Tibial artery (tissue), 4 donors: ENCODE measurements at regions of chr16 and their contacts with region 1.

Region 1: GRCh38 chr16:69123910-69124309 is 8.5 kb downstream of the CHTF8 start:
- DNase-seq: peak in 1 of 2 donors; percentile 41
- H3K4me3 ChIP-seq: no peak overlapping the region
- H3K27ac ChIP-seq: no peak overlapping the region
- H3K4me1 ChIP-seq: peaks cover 0 to 23% (median 2%) of the 10 kb centered on the region in 4 donors
- H3K27me3 ChIP-seq: no peaks in the 10 kb centered on the region
- CTCF ChIP-seq: peak; percentile 45 to 76

Region 2: DNA sequence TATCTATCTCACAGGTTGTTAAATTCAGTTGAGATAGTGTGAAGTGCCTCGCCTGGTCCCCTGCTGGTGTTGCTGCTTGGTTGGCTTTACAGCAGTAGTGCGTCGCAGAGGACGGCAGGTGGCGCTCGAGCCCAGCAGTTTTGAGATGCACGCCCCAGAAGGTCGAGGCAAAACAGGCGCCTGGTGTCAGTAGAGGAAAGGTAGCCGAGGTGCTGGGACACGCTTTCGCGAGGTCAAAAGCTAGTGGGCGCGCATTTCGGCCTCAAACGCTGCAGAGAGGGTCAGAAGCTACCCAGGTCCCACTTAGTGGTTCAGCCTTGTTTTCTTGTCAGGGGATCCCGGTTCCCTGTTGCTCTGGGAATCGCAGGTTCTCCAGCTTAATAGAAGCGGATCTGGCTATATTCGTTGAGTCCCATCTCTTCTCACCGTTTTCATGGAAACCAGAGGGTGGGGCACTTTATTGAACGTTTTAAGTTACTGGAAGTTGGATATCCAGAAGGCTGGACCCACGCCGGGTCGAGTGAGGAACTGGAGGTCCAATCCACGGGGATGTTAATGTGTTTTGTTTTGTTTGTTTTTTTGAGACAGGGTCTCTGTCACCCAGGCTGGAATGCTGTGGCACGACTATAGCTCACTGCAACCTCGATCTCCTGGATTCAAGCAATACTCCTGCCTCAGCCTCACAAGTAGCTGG is 595.1 kb before region 1 on chr16:
- intact Hi-C with region 1: loop called (anchors 5 kb)
- DNase-seq: peak; percentile 80 to 89
- H3K4me3 ChIP-seq: peak overlapping the region in 1 of 2 donors; percentile 33
- H3K27ac ChIP-seq: no peak overlapping the region
- H3K4me1 ChIP-seq: peaks cover 3 to 19% (median 13%) of the 10 kb centered on the region in 4 donors
- H3K27me3 ChIP-seq: peaks cover 0 to 3% of the 10 kb centered on the region in 2 donors
- CTCF ChIP-seq: peak; percentile 93 to 94

Region 3: DNA sequence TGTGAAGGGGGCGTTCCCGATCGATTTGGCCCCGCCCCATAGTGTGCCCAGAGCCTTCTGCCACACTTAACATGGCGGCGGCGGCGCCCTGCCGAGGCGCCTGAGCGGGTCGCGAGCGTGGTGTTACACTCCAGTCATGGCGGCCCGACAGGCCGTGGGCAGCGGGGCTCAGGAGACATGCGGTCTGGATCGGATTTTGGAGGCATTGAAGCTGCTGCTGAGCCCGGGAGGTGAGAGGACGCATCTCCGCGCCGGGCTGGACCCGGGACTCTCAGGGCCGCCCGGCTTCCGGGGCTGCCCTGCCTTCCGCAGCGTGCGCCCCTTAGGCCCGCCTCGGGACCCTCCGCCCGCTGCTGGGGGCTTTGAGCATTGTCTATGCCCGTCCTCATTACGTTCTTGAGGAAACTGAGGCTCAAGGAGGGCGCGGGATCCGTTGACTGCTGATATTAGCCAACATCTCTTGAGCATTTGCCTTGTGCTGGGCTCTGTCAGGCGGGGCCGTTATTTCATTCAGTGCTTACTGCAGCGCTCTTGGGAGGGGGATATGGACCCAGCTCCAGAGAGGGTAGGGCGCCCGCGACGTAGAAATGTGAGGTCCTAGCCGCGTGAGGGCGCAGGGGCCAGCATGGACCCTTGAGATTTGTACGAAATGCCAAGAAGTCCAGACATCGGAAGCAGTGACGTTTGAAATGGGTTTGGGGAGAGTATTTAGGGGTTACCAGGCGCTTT is 280.3 kb before region 1 on chr16 and contains the start of gene TANGO6:
- intact Hi-C with region 1: loop called (anchors 2 kb)
- DNase-seq: peak; percentile 82 to 89
- H3K4me3 ChIP-seq: peak within 1 kb of the TSS; percentile 78 to 91
- H3K27ac ChIP-seq: peak within 1 kb of the TSS; percentile 87 to 95
- H3K4me1 ChIP-seq: peaks cover 0 to 15% (median 4%) of the 10 kb centered on the region in 4 donors
- H3K27me3 ChIP-seq: no peaks in the 10 kb centered on the region
- CTCF ChIP-seq: no peak

Region 4: DNA sequence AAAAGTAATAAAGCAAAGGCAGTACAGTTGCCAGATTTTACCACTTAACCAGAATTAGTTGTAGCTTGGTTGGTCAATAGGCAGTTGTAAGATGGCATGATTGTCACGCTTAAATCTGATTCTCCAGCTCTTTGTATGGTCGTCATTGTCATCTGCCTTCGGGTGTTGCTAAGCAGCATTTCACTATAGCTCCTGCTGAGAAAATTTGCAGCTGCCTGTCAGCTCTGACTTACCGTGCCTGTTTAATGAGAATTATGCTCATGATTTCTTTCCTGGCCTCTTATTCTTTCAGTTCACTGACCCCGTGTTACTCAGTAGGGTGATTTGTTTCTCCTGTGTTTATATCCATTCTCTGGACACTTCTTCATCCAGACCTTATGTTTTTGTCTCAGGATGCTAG is 213.9 kb before region 1 on chr16:
- intact Hi-C with region 1: loop called (anchors 5 kb)
- DNase-seq: no peak
- H3K4me3 ChIP-seq: no peak overlapping the region
- H3K27ac ChIP-seq: no peak overlapping the region
- H3K4me1 ChIP-seq: no peaks in the 10 kb centered on the region
- H3K27me3 ChIP-seq: no peaks in the 10 kb centered on the region
- CTCF ChIP-seq: no peak

Region 5: GRCh38 chr16:69017036-69017783 is 106.7 kb before region 1 on chr16:
- intact Hi-C with region 1: no loop called
- DNase-seq: no peak
- H3K4me3 ChIP-seq: no peak overlapping the region
- H3K27ac ChIP-seq: no peak overlapping the region
- H3K4me1 ChIP-seq: no peaks in the 10 kb centered on the region
- H3K27me3 ChIP-seq: no peaks in the 10 kb centered on the region
- CTCF ChIP-seq: no peak